Spleen (tissue), 13 donors: ENCODE measurements at regions of chr1 and their contacts with region 1.

Region 1: GRCh38 chr1:222634180-222635013 is 16.5 kb downstream of the MIA3 start:
- DNase-seq: no peak
- H3K4me3 ChIP-seq: no peak overlapping the region
- H3K27ac ChIP-seq: peak overlapping the region in 3 of 8 donors; percentile 17 to 21 (median 21)
- H3K4me1 ChIP-seq: peaks cover 0 to 17% (median 5%) of the 10 kb centered on the region in 6 donors
- H3K27me3 ChIP-seq: no peaks in the 10 kb centered on the region
- CTCF ChIP-seq: peak; percentile 73 to 89 (median 84)
- POLR2A ChIP-seq: no peak

Region 2: GRCh38 chr1:222465211-222466041 is 169.0 kb before region 1 on chr1:
- intact Hi-C with region 1: loop called (anchors 5 kb)
- DNase-seq: peak; percentile 97
- H3K4me3 ChIP-seq: peak overlapping the region; percentile 38 to 72 (median 50)
- H3K27ac ChIP-seq: peak overlapping the region; percentile 85 to 91 (median 88)
- H3K4me1 ChIP-seq: peaks cover 3 to 23% (median 17%) of the 10 kb centered on the region in 6 donors
- H3K27me3 ChIP-seq: peaks cover 0 to under 1% (median 0%) of the 10 kb centered on the region in 7 donors
- CTCF ChIP-seq: peak; percentile 97 to 100 (median 99)
- POLR2A ChIP-seq: no peak

Region 3: GRCh38 chr1:222589462-222590302 is 44.7 kb before region 1 on chr1 and contains the start of gene TAF1A:
- intact Hi-C with region 1: loop called (anchors 10 kb)
- DNase-seq: peak; percentile 97
- H3K4me3 ChIP-seq: peak within 1 kb of the TSS; percentile 64 to 92 (median 68)
- H3K27ac ChIP-seq: peak within 1 kb of the TSS; percentile 81 to 93 (median 87)
- H3K4me1 ChIP-seq: peaks cover 17 to 59% (median 47%) of the 10 kb centered on the region in 6 donors
- H3K27me3 ChIP-seq: no peaks in the 10 kb centered on the region
- CTCF ChIP-seq: peak in 2 of 11 experiments; percentile 18 to 26
- POLR2A ChIP-seq: no peak
- total RNA-seq, gene TAF1A: 7.9 to 14.9 (median 11.8) TPM